Activated CD8-positive, alpha-beta T cell treated with anti-CD3 and anti-CD28 coated beads, Interleukin-2, amount 10 ng/mL, durations not matched to agents 7 days and 5 days (primary cell): ENCODE measurements at regions of chr3 and their contacts with region 1.

Region 1: GRCh38 chr3:155701882-155702465 is 42.9 kb downstream of the PLCH1 start:
- DNase-seq: no peak
- ATAC-seq: no peak
- H3K4me3 Mint-ChIP-seq: no peak overlapping the region
- H3K27ac Mint-ChIP-seq: no peak overlapping the region
- H3K4me1 Mint-ChIP-seq: no peaks in the 10 kb centered on the region
- H3K27me3 Mint-ChIP-seq: peaks cover 5% of the 10 kb centered on the region

Region 2: GRCh38 chr3:155352900-155353490 is 349.0 kb before region 1 on chr3:
- CTCF ChIA-PET with region 1: interaction called, 36 read pairs
- POLR2A ChIA-PET with region 1: no interaction called
- DNase-seq: no peak
- ATAC-seq: no peak
- H3K4me3 Mint-ChIP-seq: no peak overlapping the region
- H3K27ac Mint-ChIP-seq: no peak overlapping the region
- H3K4me1 Mint-ChIP-seq: no peaks in the 10 kb centered on the region
- H3K27me3 Mint-ChIP-seq: peaks cover 3% of the 10 kb centered on the region

Region 3: GRCh38 chr3:155714295-155714718 is 12.3 kb after region 1 on chr3:
- CTCF ChIA-PET with region 1: interaction called, 12 read pairs
- POLR2A ChIA-PET with region 1: no interaction called
- DNase-seq: no peak
- ATAC-seq: no peak
- H3K4me3 Mint-ChIP-seq: no peak overlapping the region
- H3K27ac Mint-ChIP-seq: no peak overlapping the region
- H3K4me1 Mint-ChIP-seq: no peaks in the 10 kb centered on the region
- H3K27me3 Mint-ChIP-seq: no peaks in the 10 kb centered on the region